ENCODE measurements at regions of chr15 and their contacts with region 1.

Region 1: DNA sequence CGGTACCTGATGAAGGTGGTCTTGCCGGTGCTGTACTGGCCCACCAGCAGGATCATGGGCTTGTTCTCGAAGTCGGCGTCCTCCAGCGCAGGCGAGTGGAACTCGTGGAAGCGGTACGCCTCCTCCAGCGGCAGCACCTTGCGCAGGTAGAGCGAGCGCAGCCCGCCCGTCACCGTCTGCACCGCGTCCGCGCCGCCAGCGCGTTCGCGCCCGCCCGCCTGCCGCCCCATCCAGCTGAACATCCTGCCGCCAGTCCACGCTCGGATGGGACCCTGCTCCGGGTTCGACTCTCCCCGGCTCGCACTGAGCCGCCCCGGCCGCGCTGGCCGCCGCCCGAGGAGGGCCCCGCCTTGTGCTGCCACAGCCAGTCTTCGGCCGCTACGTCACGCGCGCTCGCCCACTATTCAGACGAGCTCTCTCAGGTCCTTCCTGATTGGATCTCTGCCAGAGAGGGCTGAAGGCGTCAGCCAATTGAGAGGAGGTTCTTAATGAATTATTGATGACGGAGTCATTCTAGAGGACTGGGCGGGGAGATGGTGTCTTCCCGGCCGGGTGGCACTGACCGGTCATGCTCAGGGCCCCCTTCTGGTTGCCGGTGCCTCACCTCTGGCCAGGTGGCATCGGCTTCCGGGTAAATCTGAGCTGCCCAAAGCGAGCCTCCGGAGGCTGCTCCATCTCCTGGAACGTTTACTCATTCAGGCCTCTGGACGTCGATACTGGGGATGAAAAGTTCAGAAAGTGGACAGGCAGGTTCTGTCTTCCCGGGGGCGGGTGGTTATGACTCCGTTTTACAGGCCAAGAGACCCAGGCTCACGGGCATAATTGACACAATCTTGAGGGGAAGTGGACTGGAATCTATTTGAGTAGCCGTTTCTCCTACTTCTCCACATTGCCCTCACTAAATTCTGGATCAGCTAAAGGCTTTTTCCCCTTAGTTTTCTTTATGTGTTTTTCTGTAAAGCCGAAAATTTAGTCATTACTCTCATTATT is at the start of gene EHD4:
- DNase-seq: peak; percentile 98
- H3K4me3 ChIP-seq: peak within 1 kb of the TSS; percentile 84 to 100 (median 97)
- H3K27ac ChIP-seq: peak within 1 kb of the TSS; percentile 69
- H3K4me1 ChIP-seq: peaks cover 35% of the 10 kb centered on the region
- H3K27me3 ChIP-seq: no peaks in the 10 kb centered on the region
- CTCF ChIP-seq: peak; percentile 23 to 41
- POLR2A ChIP-seq: peak; percentile 98
- total RNA-seq, gene EHD4: 126 and 128 TPM in 2 replicates

Region 2: DNA sequence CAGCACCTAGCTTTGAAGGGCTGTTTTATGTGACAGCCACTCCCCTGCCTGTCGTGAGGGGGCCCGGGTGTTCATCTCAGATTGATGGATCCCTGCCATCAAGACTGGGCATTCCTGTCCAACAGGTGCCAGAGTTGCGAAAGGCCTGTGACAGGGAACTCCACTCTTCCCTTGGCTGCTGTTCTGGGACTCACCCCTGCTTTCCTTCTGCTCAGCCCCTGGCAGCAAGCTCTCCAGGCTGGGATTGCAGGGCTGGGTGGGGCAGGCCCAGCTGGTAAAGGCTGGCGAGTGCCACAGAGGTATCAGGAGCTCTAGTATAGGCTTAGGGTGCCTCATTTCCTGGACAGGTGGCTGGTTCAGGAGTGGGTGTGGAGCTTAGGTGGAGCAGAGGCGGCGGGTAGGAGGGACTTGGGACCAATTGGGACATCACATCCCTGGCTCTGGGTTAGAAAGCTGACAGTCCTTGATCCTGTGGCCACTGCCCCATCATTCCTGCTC is 134.1 kb before region 1 on chr15 and contains the start of gene PLA2G4B:
- CTCF ChIA-PET with region 1: no interaction called
- POLR2A ChIA-PET with region 1: no interaction called
- dilution Hi-C with region 1: no loop called
- intact Hi-C with region 1: no loop called
- DNase-seq: no peak
- H3K4me3 ChIP-seq: no peak within 1 kb of the TSS
- H3K27ac ChIP-seq: no peak within 1 kb of the TSS
- H3K4me1 ChIP-seq: no peaks in the 10 kb centered on the region
- H3K27me3 ChIP-seq: no peaks in the 10 kb centered on the region
- CTCF ChIP-seq: no peak
- POLR2A ChIP-seq: no peak
- total RNA-seq, gene PLA2G4B: 4.0 and 5.6 TPM in 2 replicates

Region 3: GRCh38 chr15:41930221-41930866 is 42.2 kb before region 1 on chr15:
- CTCF ChIA-PET with region 1: interaction called, 21 read pairs
- POLR2A ChIA-PET with region 1: interaction called, 4 read pairs
- dilution Hi-C with region 1: no loop called
- intact Hi-C with region 1: loop called (anchors 1 kb)
- DNase-seq: peak; percentile 80
- H3K4me3 ChIP-seq: no peak overlapping the region
- H3K27ac ChIP-seq: peak overlapping the region; percentile 82
- H3K4me1 ChIP-seq: peaks cover 93% of the 10 kb centered on the region
- H3K27me3 ChIP-seq: no peaks in the 10 kb centered on the region
- CTCF ChIP-seq: peak; percentile 20 to 44
- POLR2A ChIP-seq: no peak

Region 4: DNA sequence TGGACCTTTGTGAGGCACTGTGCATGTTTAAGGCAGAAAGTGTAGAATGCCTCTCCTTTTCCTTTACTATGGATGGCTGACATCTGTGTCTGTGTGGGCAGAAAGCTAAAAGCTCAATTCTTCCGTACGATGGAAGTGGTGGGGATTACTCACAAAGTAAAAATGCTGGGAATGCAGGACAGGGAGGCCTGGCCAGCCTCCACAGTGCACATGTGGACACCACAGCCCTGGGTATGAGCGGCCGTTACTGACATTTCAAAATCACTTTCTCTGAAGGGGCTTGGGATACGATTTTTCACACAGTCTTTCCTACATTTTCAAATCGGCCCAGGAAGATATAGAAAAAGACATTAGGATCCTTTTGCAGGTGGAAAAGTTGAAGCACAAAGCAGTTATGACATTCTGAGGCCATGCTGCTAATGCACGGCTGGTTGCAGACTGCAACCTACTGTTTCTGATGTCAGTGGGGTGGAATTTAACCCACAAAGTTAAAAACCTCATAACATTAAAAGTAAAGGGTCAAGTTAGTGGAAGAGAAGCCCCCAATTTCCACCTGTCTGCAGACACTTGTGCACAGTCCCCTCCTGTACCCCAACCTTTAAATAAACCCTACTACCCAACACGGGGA is 28.1 kb before region 1 on chr15:
- CTCF ChIA-PET with region 1: interaction called, 44 read pairs
- POLR2A ChIA-PET with region 1: interaction called, 9 read pairs
- dilution Hi-C with region 1: no loop called
- intact Hi-C with region 1: loop called (anchors 1 kb)
- DNase-seq: peak; percentile 82
- H3K4me3 ChIP-seq: no peak overlapping the region
- H3K27ac ChIP-seq: peak overlapping the region; percentile 99
- H3K4me1 ChIP-seq: peaks cover 91% of the 10 kb centered on the region
- H3K27me3 ChIP-seq: no peaks in the 10 kb centered on the region
- CTCF ChIP-seq: no peak
- POLR2A ChIP-seq: peak; percentile 20

Region 5: GRCh38 chr15:41989259-41989933 is 16.8 kb after region 1 on chr15:
- CTCF ChIA-PET with region 1: interaction called, 14 read pairs
- POLR2A ChIA-PET with region 1: no interaction called
- dilution Hi-C with region 1: no loop called
- intact Hi-C with region 1: no loop called
- DNase-seq: peak; percentile 77
- H3K4me3 ChIP-seq: no peak overlapping the region
- H3K27ac ChIP-seq: no peak overlapping the region
- H3K4me1 ChIP-seq: peaks cover 5% of the 10 kb centered on the region
- H3K27me3 ChIP-seq: no peaks in the 10 kb centered on the region
- CTCF ChIP-seq: peak; percentile 93 to 97
- POLR2A ChIP-seq: no peak

Region 6: GRCh38 chr15:42759093-42759492 is 786.5 kb after region 1 on chr15:
- CTCF ChIA-PET with region 1: no interaction called
- POLR2A ChIA-PET with region 1: no interaction called
- dilution Hi-C with region 1: no loop called
- intact Hi-C with region 1: no loop called
- DNase-seq: no peak
- H3K4me3 ChIP-seq: no peak overlapping the region
- H3K27ac ChIP-seq: no peak overlapping the region
- H3K4me1 ChIP-seq: no peaks in the 10 kb centered on the region
- H3K27me3 ChIP-seq: no peaks in the 10 kb centered on the region
- CTCF ChIP-seq: no peak
- POLR2A ChIP-seq: no peak

Measured in endothelial cell of umbilical vein (primary cell).